IMR-90 (cell line): ENCODE measurements at regions of chr1 and their contacts with region 1.

Region 1: GRCh38 chr1:109312978-109313775 is 6.4 kb upstream of the MYBPHL start:
- DNase-seq: no peak
- ATAC-seq: no peak
- H3K4me3 ChIP-seq: no peak overlapping the region
- H3K27ac ChIP-seq: no peak overlapping the region
- H3K4me1 ChIP-seq: peaks cover 16% of the 10 kb centered on the region
- H3K27me3 ChIP-seq: no peaks in the 10 kb centered on the region
- CTCF ChIP-seq: no peak
- POLR2A ChIP-seq: no peak
- RAD21 ChIP-seq: no peak

Region 2: DNA sequence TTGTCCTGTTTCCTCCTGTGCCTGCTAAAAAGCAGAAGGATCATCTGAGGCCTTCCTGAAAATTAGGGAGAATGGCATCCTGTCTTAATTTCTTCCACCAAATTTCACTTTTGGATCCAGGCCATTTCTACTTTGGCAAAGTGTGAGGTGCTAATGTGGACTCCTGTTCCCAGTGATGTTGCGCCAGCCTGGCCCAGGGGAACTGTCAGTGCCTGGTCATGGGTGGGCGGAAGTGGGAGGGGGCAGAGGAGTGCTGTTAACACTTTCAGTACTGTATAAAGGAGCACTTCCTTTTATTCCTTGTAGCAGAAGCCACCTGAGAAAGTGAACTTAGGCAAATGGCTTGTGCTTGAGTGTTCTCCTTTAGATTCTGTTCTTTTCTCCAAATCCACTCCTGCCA is 179.4 kb before region 1 on chr1:
- CTCF ChIA-PET with region 1: no interaction called
- POLR2A ChIA-PET with region 1: no interaction called
- dilution Hi-C with region 1: no loop called
- in situ Hi-C with region 1: no loop called
- intact Hi-C with region 1: no loop called
- DNase-seq: no peak
- ATAC-seq: no peak
- H3K4me3 ChIP-seq: no peak overlapping the region
- H3K27ac ChIP-seq: no peak overlapping the region
- H3K4me1 ChIP-seq: no peaks in the 10 kb centered on the region
- H3K27me3 ChIP-seq: no peaks in the 10 kb centered on the region
- CTCF ChIP-seq: no peak
- POLR2A ChIP-seq: no peak
- RAD21 ChIP-seq: no peak

Region 3: GRCh38 chr1:109350655-109351054 is 37.5 kb after region 1 on chr1:
- CTCF ChIA-PET with region 1: no interaction called
- POLR2A ChIA-PET with region 1: no interaction called
- dilution Hi-C with region 1: no loop called
- in situ Hi-C with region 1: no loop called
- intact Hi-C with region 1: loop called (anchors 5 kb)
- DNase-seq: no peak
- ATAC-seq: no peak
- H3K4me3 ChIP-seq: no peak overlapping the region
- H3K27ac ChIP-seq: no peak overlapping the region
- H3K4me1 ChIP-seq: no peaks in the 10 kb centered on the region
- H3K27me3 ChIP-seq: no peaks in the 10 kb centered on the region
- CTCF ChIP-seq: no peak
- POLR2A ChIP-seq: no peak
- RAD21 ChIP-seq: no peak